Motor neuron (in vitro differentiated cells): ENCODE measurements at regions of chr6 and their contacts with region 1.

Region 1: GRCh38 chr6:167350731-167351655 is 26.1 kb downstream of the TTLL2 start:
- ATAC-seq: peak; percentile 64 to 93 (median 90)
- H3K4me3 ChIP-seq: peak overlapping the region; percentile 15 to 35 (median 22)
- H3K27ac ChIP-seq: peak overlapping the region; percentile 32 to 62
- H3K4me1 ChIP-seq: peaks cover 16 to 22% of the 10 kb centered on the region in 2 donors

Region 2: GRCh38 chr6:167212713-167213005 is 138.3 kb before region 1 on chr6:
- in situ Hi-C with region 1: loop called in 2 of 9 experiments (anchors 25 kb)
- ATAC-seq: no peak
- H3K4me3 ChIP-seq: no peak overlapping the region
- H3K27ac ChIP-seq: no peak overlapping the region
- H3K4me1 ChIP-seq: peaks cover 14 to 16% of the 10 kb centered on the region in 2 donors

Region 3: DNA sequence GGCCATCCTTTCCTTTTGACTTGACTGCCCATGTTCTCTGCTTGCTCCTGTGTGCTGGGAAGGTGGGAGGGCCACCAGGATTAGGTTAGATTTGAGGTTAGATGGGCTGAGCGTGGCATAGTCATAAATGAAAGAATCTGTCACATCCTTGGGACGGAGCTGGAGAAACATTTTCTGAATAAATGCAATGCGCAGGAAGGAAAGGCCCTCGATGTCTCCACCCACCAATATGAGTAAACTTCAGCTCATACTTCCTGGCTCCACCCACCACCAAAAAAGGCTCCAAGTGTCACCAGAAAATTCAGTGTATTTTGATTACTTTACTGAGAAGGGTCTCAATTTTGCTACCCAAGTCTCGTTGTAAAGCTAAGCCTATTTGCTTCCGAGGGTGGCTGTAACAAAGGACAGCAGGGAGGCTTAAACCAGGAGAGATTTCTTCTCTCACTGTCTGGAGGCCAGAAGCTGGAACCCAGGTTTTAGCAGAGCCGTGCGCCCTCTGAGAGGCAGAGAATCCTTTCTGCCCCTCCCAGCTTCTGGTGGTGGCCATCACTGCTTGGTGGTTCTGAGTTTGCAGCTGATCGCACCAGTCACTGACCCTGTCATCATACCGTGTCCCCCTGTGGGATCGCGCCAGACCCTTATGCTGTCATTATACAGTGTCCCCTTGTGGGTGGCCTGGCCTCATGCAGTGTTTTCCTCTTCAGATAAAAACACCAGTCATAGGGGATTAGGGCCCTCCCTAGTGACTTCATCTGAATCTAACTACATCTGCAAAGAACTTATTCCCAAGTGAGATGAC is 111.7 kb after region 1 on chr6:
- in situ Hi-C with region 1: no loop called
- ATAC-seq: peak in 2 of 8 experiments; percentile 58 to 74
- H3K4me3 ChIP-seq: no peak overlapping the region
- H3K27ac ChIP-seq: no peak overlapping the region
- H3K4me1 ChIP-seq: peaks cover 7 to 8% of the 10 kb centered on the region in 2 donors